SK-N-SH (cell line): ENCODE measurements at regions of chr18 and their contacts with region 1.

Region 1: GRCh38 chr18:37341016-37341415 is 224.6 kb downstream of the CELF4 start:
- DNase-seq: no peak
- H3K4me3 ChIP-seq: no peak overlapping the region
- H3K27ac ChIP-seq: no peak overlapping the region; a peak in 1 of 4 replicates
- H3K4me1 ChIP-seq: peaks cover 0 to 9% of the 10 kb centered on the region in 2 experiments; a peak in 1 of 4 replicates
- H3K27me3 ChIP-seq: no peaks in the 10 kb centered on the region
- CTCF ChIP-seq: no peak
- EP300 ChIP-seq: no peak
- RAD21 ChIP-seq: no peak

Region 2: GRCh38 chr18:37355772-37356171 is 14.8 kb after region 1 on chr18:
- CTCF ChIA-PET with region 1: interaction called, 22 read pairs
- POLR2A ChIA-PET with region 1: no interaction called
- DNase-seq: no peak
- H3K4me3 ChIP-seq: no peak overlapping the region
- H3K27ac ChIP-seq: no peak overlapping the region
- H3K4me1 ChIP-seq: peaks cover 0 to 2% of the 10 kb centered on the region in 2 experiments; a peak in 1 of 4 replicates
- H3K27me3 ChIP-seq: no peaks in the 10 kb centered on the region
- CTCF ChIP-seq: no peak
- EP300 ChIP-seq: no peak
- RAD21 ChIP-seq: no peak

Region 3: DNA sequence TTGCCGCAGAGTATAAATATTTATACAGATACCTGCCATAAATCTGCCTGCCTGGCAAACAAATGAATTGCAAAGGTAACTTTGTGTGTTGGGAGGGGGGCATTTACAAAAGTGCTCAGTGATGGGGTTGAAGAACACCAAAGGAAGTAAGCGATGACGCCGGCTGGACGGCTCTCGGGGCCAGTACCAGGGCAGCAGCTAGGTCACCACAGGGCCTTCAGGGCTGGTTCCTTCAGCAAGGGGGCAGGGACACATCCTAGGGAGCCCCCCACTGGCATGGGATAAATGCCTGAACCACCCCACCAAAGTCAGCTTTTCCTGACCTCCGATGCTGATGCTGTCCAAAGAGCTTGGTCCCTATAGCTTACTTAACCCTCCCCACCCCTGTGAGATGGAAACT is 34.2 kb after region 1 on chr18:
- CTCF ChIA-PET with region 1: interaction called, 13 read pairs
- POLR2A ChIA-PET with region 1: no interaction called
- DNase-seq: no peak
- H3K4me3 ChIP-seq: no peak overlapping the region
- H3K27ac ChIP-seq: no peak overlapping the region
- H3K4me1 ChIP-seq: peaks cover 0 to 48% of the 10 kb centered on the region in 2 experiments; a peak in 1 of 4 replicates
- H3K27me3 ChIP-seq: no peaks in the 10 kb centered on the region
- CTCF ChIP-seq: no peak
- EP300 ChIP-seq: no peak
- RAD21 ChIP-seq: no peak

Region 4: DNA sequence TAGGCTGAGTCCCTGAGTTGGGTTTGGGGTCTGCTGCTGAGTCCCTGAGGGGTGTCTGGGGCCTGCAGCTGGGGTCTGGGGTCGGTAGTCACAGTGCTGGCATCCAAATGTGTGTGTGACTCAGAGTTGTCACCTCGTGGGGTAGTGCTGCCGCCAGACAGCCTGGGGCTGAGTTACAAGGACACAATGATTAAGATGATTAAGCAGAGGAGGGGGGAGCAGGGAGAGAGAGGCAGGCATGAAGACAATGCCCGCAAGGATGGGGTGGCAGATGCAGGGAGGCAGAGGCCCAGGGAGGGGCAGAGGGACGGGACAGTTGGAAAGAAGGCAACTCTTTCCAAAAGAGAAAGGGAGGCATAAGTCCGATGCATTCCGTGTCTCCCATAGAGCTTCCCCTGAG is 104.4 kb after region 1 on chr18:
- CTCF ChIA-PET with region 1: interaction called, 44 read pairs
- POLR2A ChIA-PET with region 1: interaction called, 3 read pairs
- DNase-seq: peak; percentile 54
- H3K4me3 ChIP-seq: no peak overlapping the region
- H3K27ac ChIP-seq: peak overlapping the region in 1 of 2 experiments; percentile 74; a peak in 2 of 4 replicates
- H3K4me1 ChIP-seq: peaks cover 0 to 79% of the 10 kb centered on the region in 2 experiments; a peak in 2 of 4 replicates
- H3K27me3 ChIP-seq: no peaks in the 10 kb centered on the region
- CTCF ChIP-seq: no peak
- EP300 ChIP-seq: no peak
- RAD21 ChIP-seq: no peak